ENCODE measurements at regions of chr9 and their contacts with region 1.

Region 1: DNA sequence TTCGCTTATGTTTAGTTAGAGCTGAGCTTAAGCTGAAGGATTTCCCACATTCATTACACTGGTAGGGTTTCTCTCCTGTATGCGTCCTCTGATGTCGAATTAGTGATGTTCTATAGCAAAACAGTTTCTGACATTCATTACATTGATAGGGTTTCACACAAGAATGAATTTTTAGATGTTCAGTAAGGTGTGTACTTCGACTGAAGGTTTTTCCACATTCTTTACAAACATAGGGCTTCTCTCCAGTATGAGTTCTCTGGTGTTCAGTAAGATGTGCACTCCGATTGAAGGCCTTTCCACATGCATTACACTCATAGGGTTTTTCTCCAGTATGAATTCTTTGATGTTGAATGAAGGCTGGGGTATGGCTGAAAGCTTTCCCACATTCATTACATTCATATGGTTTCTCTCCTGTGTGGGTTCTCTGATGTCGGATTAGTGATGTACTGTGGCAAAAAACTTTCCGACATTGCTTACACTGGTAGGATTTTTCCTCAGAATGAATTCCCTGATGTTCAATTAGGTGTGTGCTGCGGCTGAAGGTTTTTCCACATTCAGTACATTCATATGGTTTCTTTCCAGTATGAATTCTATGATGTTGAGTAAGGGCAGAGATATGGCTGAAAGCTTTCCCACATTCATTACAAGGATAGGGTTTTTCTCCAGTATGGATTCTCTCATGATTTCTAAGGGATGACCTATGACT is 14.6 kb downstream of the ZNF883 start:
- DNase-seq: no peak
- H3K4me3 Mint-ChIP-seq: no peak overlapping the region
- H3K27ac Mint-ChIP-seq: no peak overlapping the region
- H3K4me1 Mint-ChIP-seq: no peaks in the 10 kb centered on the region
- H3K27me3 Mint-ChIP-seq: no peaks in the 10 kb centered on the region
- CTCF ChIP-seq: no peak

Region 2: GRCh38 chr9:113042884-113043657 is 45.7 kb after region 1 on chr9:
- CTCF ChIA-PET with region 1: no interaction called
- POLR2A ChIA-PET with region 1: interaction called, 3 read pairs
- intact Hi-C with region 1: loop called (anchors 1 kb)
- DNase-seq: peak; percentile 5
- H3K4me3 Mint-ChIP-seq: no peak overlapping the region
- H3K27ac Mint-ChIP-seq: no peak overlapping the region
- H3K4me1 Mint-ChIP-seq: no peaks in the 10 kb centered on the region
- H3K27me3 Mint-ChIP-seq: no peaks in the 10 kb centered on the region
- CTCF ChIP-seq: no peak

Measured in MCF 10A (cell line).